Endothelial cell of umbilical vein (primary cell): ENCODE measurements at regions of chr6 and their contacts with region 1.

Region 1: DNA sequence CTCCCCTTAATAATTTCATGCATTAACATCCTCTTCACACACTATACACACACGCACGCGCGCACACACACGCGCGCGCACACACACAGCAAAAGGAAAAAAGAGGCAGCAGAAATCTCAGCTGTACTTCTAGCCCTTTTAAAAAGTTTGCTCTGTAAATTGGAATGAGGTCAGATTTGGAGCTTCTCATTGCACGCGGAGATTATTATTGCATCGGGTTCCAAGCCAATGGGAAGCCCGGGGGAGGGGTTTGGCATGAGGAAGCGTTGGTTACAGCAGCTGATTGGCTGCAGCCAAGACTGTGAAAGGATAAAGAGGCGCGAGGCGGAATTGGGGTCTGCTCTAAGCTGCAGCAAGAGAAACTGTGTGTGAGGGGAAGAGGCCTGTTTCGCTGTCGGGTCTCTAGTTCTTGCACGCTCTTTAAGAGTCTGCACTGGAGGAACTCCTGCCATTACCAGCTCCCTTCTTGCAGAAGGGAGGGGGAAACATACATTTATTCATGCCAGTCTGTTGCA is at the start of gene SOX4:
- DNase-seq: peak; percentile 99
- H3K4me3 ChIP-seq: peak within 1 kb of the TSS; percentile 85 to 98 (median 96)
- H3K27ac ChIP-seq: peak within 1 kb of the TSS; percentile 94
- H3K4me1 ChIP-seq: peaks cover 14% of the 10 kb centered on the region
- H3K27me3 ChIP-seq: no peaks in the 10 kb centered on the region
- CTCF ChIP-seq: no peak
- POLR2A ChIP-seq: peak; percentile 100
- total RNA-seq, gene SOX4: 121 and 127 TPM in 2 replicates

Region 2: DNA sequence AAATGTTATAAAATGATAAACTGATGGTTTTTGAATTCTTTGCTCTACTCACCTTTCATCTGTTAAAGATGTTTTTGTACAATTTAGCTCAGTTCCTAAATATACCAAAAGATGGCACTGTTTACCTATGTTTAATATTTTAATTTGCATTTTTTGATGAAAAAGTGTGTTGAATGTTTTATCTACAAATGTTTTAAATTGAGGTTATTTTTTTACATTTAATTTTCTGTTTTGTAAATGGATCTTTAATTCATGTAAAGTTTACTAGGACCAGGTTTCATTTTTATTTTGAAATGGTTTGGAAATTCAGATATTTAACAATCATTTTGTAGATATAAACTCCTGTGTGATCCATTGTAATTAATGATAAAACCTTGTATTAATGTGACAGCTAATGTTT is 1029.2 kb before region 1 on chr6:
- CTCF ChIA-PET with region 1: interaction called, 222 read pairs
- POLR2A ChIA-PET with region 1: interaction called, 18 read pairs
- dilution Hi-C with region 1: no loop called
- intact Hi-C with region 1: loop called (anchors 1 kb)
- DNase-seq: peak; percentile 59
- H3K4me3 ChIP-seq: peak overlapping the region in 1 of 3 experiments; percentile 28
- H3K27ac ChIP-seq: peak overlapping the region; percentile 32
- H3K4me1 ChIP-seq: peaks cover 12% of the 10 kb centered on the region
- H3K27me3 ChIP-seq: no peaks in the 10 kb centered on the region
- CTCF ChIP-seq: peak; percentile 16 to 33
- POLR2A ChIP-seq: no peak

Region 3: DNA sequence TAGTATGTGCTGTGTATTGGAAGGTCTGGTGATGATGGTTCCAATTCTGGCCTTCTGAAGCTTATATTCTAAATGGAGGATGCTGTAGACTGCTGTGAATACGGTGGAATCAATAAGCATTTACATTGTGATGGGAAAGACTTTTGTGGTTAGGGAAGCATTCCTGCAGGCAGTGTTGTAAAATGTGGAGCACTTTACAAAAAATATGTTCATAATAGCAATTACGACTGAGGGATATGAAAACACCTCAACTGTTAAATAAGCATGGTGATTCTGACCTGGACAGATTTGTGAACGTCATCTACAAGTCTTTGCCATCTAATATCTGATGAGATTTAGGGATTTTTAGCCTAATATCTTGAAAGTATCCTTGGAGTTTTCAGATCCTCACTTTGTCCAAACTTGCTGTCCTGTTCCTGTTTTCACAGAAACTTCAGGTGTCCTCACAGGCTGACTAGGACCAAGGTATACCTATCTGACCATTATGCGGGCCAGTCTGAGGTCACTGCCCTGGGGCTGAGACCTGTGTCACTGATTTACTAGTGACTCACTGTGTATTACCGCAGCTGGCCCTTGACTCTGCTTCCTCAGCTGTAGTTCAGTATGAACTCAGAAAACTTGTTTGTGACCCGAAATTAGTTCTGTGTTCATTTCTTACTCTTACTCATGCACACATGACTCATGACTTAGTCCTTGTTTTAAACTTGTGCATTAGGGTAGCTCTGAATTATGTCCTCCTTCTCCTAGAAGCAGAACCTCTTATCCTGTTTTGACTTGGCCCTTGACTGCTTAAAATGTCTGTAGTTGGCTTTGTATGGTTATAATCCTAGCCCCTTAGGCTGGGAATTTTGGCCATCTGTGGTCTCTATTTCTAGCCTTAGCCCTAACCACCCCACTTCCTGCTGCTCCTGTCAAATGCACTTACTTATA is 716.2 kb before region 1 on chr6:
- CTCF ChIA-PET with region 1: interaction called, 117 read pairs
- POLR2A ChIA-PET with region 1: interaction called, 15 read pairs
- dilution Hi-C with region 1: no loop called
- intact Hi-C with region 1: loop called (anchors 1 kb)
- DNase-seq: peak; percentile 94
- H3K4me3 ChIP-seq: no peak overlapping the region
- H3K27ac ChIP-seq: peak overlapping the region; percentile 85
- H3K4me1 ChIP-seq: peaks cover 38% of the 10 kb centered on the region
- H3K27me3 ChIP-seq: no peaks in the 10 kb centered on the region
- CTCF ChIP-seq: no peak
- POLR2A ChIP-seq: peak; percentile 8

Region 4: DNA sequence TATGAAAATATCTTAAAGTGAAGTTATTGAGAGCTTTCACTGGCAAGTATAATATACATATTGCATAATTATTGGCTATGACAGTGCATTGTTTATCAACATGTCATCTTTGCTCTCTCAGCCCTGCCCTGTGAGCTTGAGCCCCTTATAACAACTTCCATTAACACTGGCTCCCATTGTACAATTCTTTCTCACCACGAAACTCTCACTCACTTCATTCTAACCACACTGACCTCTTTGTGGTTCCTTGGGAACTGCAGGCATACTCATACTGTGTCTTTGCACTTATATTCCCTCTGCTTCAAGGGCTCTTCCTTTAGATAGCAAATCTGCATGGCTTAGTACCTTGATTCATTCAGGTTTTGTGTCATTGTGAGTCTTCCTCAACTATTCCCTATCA is 647.4 kb before region 1 on chr6:
- CTCF ChIA-PET with region 1: no interaction called
- POLR2A ChIA-PET with region 1: no interaction called
- dilution Hi-C with region 1: no loop called
- intact Hi-C with region 1: no loop called
- DNase-seq: no peak
- H3K4me3 ChIP-seq: no peak overlapping the region
- H3K27ac ChIP-seq: no peak overlapping the region
- H3K4me1 ChIP-seq: no peaks in the 10 kb centered on the region
- H3K27me3 ChIP-seq: no peaks in the 10 kb centered on the region
- CTCF ChIP-seq: no peak
- POLR2A ChIP-seq: no peak

Region 5: DNA sequence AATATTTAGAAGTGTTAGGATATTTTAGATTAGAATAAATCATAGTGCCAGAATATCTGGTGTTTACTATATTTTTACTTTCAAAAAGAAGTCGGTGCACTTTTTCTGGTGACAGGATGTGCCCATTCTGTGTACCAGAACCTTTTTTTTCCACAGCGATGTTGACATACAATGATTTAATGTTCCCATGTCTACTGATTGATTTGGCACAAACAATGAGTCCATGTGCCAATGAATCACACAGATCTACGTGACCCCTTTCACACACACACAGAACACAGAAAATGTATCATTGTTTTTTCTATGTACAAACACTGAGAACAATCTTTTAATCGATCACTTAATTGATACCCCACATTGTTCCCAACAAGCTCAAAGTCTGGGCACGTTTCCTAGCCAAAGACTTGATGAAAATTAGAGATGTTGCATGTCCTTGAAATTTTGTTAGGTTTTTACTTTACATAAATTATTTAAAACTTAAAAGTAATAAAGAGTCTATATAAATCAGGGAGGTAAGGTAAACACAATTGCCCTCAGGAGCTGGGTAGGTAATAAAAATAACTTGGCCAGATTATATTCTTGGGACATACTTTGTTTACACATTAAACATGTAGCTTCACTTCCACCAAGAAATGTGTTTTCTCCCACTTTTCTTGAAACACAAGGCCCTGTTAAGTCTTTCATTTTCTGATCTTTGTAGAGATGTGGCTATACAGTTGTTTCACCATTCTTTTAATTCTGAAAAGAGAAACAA is 36.3 kb before region 1 on chr6:
- CTCF ChIA-PET with region 1: no interaction called
- POLR2A ChIA-PET with region 1: no interaction called
- dilution Hi-C with region 1: no loop called
- intact Hi-C with region 1: no loop called
- DNase-seq: peak; percentile 67
- H3K4me3 ChIP-seq: no peak overlapping the region
- H3K27ac ChIP-seq: no peak overlapping the region
- H3K4me1 ChIP-seq: no peaks in the 10 kb centered on the region
- H3K27me3 ChIP-seq: no peaks in the 10 kb centered on the region
- CTCF ChIP-seq: no peak
- POLR2A ChIP-seq: no peak

Region 6: DNA sequence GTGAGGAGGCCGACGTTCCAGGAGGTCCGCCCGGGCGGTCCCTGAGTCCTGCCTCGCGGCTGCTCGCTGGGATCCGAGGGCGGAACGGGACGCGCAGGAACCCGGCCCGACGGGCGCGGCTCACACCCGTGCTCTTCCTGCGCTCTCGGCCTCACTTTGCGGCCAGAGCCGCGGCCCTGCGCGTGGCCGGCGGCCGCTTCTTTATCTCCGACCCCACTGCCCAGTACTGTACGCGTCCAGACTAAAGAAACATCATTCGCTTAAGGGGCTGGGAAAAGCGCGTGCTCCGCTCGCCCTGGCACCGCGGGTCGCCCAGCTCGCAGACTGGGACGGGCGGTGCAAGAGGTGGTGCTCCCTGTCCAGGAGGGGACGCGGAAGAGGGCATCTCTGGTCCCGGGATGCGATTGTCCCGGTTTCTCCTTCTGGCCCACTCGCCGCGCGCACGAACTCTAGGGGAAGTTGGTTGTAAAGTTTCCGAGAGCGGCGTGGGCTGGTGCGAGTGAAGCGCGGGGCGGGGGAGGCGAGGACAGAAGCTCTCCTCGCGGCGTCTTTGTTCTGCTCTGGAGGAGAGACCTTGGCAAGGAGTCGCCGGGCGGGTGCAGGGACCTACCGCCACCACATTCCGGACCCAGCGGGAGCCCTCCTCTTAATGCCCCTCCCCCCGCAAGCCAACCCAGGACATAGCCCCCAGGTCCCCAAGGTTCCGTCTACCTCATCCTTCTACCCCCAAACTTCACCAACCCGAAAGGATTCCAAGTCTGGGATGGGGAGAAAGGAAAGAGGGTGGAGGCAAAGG is 71.0 kb after region 1 on chr6:
- CTCF ChIA-PET with region 1: interaction called, 6 read pairs
- POLR2A ChIA-PET with region 1: interaction called, 11 read pairs
- dilution Hi-C with region 1: no loop called
- intact Hi-C with region 1: loop called (anchors 2 kb)
- DNase-seq: peak; percentile 61
- H3K4me3 ChIP-seq: peak overlapping the region; percentile 47 to 59 (median 55)
- H3K27ac ChIP-seq: peak overlapping the region; percentile 22
- H3K4me1 ChIP-seq: peaks cover 24% of the 10 kb centered on the region
- H3K27me3 ChIP-seq: no peaks in the 10 kb centered on the region
- CTCF ChIP-seq: no peak
- POLR2A ChIP-seq: no peak

Region 7: GRCh38 chr6:21885532-21886114 is 292.2 kb after region 1 on chr6:
- CTCF ChIA-PET with region 1: no interaction called
- POLR2A ChIA-PET with region 1: interaction called, 13 read pairs
- dilution Hi-C with region 1: no loop called
- intact Hi-C with region 1: loop called (anchors 1 kb)
- DNase-seq: peak; percentile 93
- H3K4me3 ChIP-seq: no peak overlapping the region
- H3K27ac ChIP-seq: peak overlapping the region; percentile 85
- H3K4me1 ChIP-seq: peaks cover 37% of the 10 kb centered on the region
- H3K27me3 ChIP-seq: no peaks in the 10 kb centered on the region
- CTCF ChIP-seq: no peak
- POLR2A ChIP-seq: no peak

Region 8: GRCh38 chr6:22448291-22448711 is 854.8 kb after region 1 on chr6:
- CTCF ChIA-PET with region 1: no interaction called
- POLR2A ChIA-PET with region 1: interaction called, 6 read pairs
- dilution Hi-C with region 1: no loop called
- intact Hi-C with region 1: loop called (anchors 5 kb)
- DNase-seq: peak; percentile 98
- H3K4me3 ChIP-seq: no peak overlapping the region
- H3K27ac ChIP-seq: peak overlapping the region; percentile 85
- H3K4me1 ChIP-seq: peaks cover 49% of the 10 kb centered on the region
- H3K27me3 ChIP-seq: no peaks in the 10 kb centered on the region
- CTCF ChIP-seq: no peak
- POLR2A ChIP-seq: no peak

Region 9: DNA sequence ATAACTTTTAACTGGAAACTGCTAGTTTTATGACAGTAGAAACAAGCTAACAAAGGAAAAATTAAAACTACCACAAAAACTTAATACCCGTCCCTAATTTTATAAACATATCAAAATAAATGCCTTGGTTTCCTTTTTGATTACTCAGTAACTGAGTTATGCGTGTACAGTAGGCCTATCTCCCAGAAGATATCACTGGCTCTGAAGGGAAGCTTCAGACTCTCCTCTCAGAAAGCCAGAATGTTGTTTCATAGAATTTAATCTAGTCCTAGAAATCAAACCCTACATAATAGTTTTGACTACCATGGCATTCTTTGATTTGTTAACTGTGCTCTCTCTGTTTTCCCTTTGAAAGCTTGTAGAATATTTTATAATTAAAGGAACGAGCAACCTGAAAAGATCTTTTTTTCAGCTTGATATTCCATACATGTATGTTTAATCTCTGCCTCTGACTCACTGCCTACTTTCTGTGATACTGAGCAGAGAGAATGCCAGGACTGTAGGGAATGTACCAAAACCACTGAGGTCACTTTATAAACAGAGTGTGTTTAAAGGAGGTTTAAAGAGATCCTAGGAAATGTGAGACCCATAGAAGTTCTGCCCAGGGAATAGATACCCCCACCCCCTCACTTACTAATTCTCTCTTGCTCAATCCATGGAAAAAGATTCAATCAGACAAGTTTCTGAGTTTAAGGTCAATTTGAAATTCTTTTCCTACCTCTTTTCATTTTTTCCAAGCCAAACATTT is 1287.4 kb after region 1 on chr6:
- CTCF ChIA-PET with region 1: interaction called, 4 read pairs
- POLR2A ChIA-PET with region 1: interaction called, 8 read pairs
- dilution Hi-C with region 1: no loop called
- intact Hi-C with region 1: loop called (anchors 2 kb)
- DNase-seq: peak; percentile 92
- H3K4me3 ChIP-seq: no peak overlapping the region
- H3K27ac ChIP-seq: peak overlapping the region; percentile 80
- H3K4me1 ChIP-seq: peaks cover 53% of the 10 kb centered on the region
- H3K27me3 ChIP-seq: no peaks in the 10 kb centered on the region
- CTCF ChIP-seq: no peak
- POLR2A ChIP-seq: no peak